Activated CD4-positive, alpha-beta memory T cell treated with anti-CD3 and anti-CD28 coated beads for 36 hours (primary cell): ENCODE measurements at regions of chr16 and their contacts with region 1.

Region 1: GRCh38 chr16:234468-235305 is at the start of gene FAM234A:
- DNase-seq: peak; percentile 96
- H3K4me3 Mint-ChIP-seq: peak within 1 kb of the TSS; percentile 91
- H3K27ac Mint-ChIP-seq: peak within 1 kb of the TSS; percentile 95
- H3K4me1 Mint-ChIP-seq: peaks cover 18% of the 10 kb centered on the region
- H3K27me3 Mint-ChIP-seq: no peaks in the 10 kb centered on the region
- total RNA-seq, gene FAM234A: 15.7 to 18.4 TPM

Region 2: DNA sequence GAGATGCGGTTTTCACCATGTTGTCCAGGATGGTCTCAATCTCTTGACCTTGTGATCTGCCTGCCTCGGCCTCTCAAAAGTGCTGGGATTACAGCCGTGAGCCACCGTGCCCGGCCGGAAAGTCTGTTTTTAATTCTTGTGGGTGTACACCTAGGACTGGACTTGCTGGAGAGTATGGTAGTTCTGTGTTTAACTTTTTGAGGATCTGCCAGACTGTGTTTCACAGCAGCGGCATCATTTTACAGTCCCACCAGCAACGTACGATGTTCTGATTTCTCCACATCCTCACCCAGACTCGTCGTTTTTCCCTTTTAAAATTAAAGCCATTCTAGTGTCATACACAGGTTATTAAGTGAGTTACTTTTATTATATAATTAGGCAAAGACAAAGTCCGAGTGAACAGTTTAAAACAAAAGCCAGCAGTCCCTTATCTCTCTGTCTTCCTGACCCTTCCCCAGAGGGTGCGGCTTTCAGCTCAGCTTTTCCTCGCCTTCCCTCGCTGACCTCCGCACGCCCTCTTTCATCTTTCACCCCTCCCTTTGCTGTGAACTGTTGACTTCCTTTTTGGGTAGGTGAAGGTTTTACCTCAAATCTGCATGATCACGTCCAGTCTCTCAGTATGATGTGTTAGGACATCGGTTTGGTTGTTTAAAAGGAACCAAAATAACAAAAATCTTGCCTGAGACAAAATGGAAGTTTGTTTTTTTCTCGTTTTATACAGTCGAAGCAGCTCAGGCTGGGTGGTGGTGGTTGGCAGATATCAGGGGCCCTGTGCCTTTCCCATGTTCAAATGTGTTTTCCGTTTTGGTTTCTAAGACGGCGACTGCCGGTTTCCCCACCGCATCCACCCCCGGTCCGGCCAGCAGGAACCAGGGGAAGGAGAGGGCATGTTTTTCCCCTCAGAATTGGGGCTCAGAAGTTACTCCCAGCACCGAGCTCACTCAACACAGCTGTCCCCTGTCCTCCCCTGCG is 18.0 kb after region 1 on chr16:
- CTCF ChIA-PET with region 1: interaction called, 18 read pairs
- POLR2A ChIA-PET with region 1: interaction called, 11 read pairs
- intact Hi-C with region 1: loop called (anchors 2 kb)
- DNase-seq: peak; percentile 58
- H3K4me3 Mint-ChIP-seq: peak overlapping the region; percentile 59
- H3K27ac Mint-ChIP-seq: peak overlapping the region; percentile 76
- H3K4me1 Mint-ChIP-seq: peaks cover 37% of the 10 kb centered on the region
- H3K27me3 Mint-ChIP-seq: no peaks in the 10 kb centered on the region

Region 3: GRCh38 chr16:346587-346986 is 111.9 kb after region 1 on chr16:
- CTCF ChIA-PET with region 1: interaction called, 15 read pairs
- POLR2A ChIA-PET with region 1: interaction called, 12 read pairs
- intact Hi-C with region 1: no loop called
- DNase-seq: no peak
- H3K4me3 Mint-ChIP-seq: no peak overlapping the region
- H3K27ac Mint-ChIP-seq: no peak overlapping the region
- H3K4me1 Mint-ChIP-seq: peaks cover 76% of the 10 kb centered on the region
- H3K27me3 Mint-ChIP-seq: no peaks in the 10 kb centered on the region

Region 4: DNA sequence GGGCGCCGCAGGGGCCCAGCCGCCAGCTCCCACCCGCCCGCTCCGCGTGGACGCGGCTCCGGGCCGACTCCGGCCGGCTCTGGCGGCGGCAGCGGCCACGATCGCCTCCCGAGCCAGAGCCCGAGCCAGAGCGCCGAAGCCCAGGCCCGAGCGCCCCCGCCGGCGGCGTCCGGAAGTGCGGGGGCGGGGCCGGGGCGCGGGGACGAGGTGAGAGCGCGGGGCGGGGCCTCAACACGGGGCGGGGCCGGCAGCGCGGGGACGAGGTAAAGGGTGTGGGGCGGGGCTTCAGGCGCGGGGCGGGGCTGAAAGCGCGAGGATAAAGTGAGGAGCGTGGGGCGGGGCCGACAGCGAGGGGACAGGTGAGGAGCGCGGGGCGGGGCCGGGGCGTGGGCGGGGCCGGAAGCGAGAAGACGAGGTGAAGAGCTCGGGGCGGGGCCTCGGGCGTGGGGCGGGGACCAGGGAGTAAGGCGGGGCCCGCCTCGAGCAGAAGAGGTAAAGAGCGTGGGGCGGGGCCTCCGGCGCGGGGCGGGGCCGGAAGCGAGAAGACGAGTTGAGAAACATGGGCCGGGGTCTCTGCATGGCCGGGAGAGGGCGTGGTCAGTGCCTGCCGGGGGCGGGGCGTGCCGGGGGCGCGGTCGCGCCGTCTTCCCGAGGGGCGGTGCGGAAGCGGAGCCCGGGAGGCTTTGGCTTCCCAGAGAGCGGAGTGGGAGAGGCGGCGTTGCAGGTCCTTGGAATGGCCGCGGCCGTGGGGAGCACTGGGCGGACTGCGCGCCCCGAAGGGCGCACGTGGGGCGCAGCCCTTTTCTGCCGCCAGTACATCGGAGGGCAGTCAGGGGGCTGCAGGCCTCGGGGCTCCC is 118.1 kb after region 1 on chr16 and contains the start of gene AXIN1:
- CTCF ChIA-PET with region 1: interaction called, 15 read pairs
- POLR2A ChIA-PET with region 1: interaction called, 12 read pairs
- intact Hi-C with region 1: loop called (anchors 2 kb)
- DNase-seq: peak; percentile 100
- H3K4me3 Mint-ChIP-seq: peak within 1 kb of the TSS; percentile 81
- H3K27ac Mint-ChIP-seq: peak within 1 kb of the TSS; percentile 77
- H3K4me1 Mint-ChIP-seq: peaks cover 44% of the 10 kb centered on the region
- H3K27me3 Mint-ChIP-seq: no peaks in the 10 kb centered on the region
- total RNA-seq, gene AXIN1: 18.6 to 20.5 TPM

Region 5: GRCh38 chr16:370443-370842 is 135.8 kb after region 1 on chr16 and contains the start of gene MRPL28:
- CTCF ChIA-PET with region 1: no interaction called
- POLR2A ChIA-PET with region 1: no interaction called
- intact Hi-C with region 1: loop called (anchors 1 kb)
- DNase-seq: peak; percentile 97
- H3K4me3 Mint-ChIP-seq: peak within 1 kb of the TSS; percentile 85
- H3K27ac Mint-ChIP-seq: peak within 1 kb of the TSS; percentile 85
- H3K4me1 Mint-ChIP-seq: peaks cover 11% of the 10 kb centered on the region
- H3K27me3 Mint-ChIP-seq: no peaks in the 10 kb centered on the region
- total RNA-seq, gene MRPL28: 76.8 to 77.3 TPM